Calu3 (cell line): ENCODE measurements at regions of chr4 and their contacts with region 1.

Region 1: DNA sequence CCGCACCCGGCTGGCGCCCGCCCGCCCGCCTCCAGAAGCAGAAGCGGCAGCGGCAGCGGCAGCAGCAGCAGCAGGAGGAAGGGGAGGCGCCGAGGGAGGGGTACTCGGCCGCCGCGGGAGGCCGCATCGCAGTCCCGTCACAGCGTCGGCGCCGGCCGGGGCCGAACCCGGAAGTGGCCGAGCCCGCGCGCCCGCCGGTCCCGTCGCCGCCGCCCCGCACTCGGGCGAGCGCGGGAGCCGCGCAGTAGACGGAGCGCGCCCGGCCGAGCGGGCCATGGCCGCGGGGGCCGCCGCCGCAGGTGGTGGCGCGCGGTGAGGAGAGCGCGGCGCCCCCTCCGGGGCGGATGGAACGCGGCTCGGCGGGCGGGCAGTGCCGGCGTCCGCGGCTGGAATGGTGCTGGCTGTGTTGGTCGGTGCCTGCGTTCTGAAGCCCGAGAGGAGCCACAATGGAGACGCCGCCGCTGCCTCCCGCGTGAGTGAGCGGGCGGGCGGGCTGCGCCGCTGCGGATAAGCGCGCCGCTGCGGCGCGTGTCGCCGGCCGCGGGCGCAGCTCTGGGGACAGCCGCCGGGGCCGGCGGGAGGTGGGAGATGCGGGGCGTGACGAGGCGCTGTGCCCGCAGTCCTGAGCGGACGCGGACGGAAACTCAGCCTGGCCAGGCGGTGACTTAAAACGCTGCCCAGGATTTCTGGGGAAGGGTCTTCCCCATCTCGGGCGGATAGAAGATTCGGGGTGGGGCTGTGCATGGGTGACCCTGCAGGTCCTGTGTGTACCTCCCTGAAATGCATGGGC is at the start of gene KLHL2:
- DNase-seq: peak; percentile 72
- H3K4me3 Mint-ChIP-seq: peak within 1 kb of the TSS; percentile 58
- H3K27ac Mint-ChIP-seq: peak within 1 kb of the TSS; percentile 9
- H3K4me1 Mint-ChIP-seq: peaks cover 39% of the 10 kb centered on the region
- H3K27me3 Mint-ChIP-seq: no peaks in the 10 kb centered on the region
- CTCF ChIP-seq: no peak
- total RNA-seq, gene KLHL2: 12.9 and 13.8 TPM in 2 replicates

Region 2: DNA sequence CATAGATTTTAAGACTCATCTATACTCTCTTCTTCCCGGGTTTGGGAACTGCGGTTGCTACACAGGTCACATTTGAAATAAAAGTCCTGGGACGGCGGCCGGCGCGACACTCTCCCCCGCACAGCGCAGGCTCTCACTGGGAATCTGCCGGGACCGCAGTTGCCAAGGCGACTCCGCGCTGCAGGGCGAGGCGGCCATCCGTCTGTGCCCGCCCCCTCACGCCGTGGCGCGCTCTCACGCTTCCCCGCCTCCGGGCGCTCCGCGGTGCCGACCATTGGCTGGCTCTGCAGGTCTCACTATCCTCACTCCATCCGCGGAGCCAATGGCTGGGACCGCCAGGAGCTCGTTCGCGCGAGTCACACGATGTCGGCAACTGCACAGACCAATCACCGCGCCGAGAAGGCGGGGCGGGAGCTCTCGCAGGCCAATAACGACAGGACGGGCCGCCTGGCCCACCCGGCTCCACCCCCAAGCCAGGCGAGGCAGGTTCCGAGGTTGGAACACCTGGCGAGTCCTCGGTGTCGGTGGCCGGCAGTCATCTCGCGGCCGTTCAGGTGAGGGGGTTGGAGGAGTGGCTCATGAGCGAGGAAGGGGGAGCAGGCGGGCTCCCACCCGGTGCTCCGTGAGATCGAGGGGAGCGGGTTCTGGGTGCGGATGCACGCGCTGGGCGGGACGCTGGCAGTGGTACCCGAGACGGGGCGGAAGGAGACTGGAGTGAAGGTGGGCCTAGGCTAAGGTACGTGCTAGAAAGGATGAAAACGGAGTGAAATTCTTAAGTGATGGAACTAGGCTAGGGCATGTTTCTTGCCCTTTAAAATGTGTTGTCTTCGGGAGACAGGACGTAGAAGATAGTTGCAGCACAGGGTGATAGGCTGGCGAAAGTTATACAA is 119.8 kb after region 1 on chr4 and contains the start of gene MSMO1:
- CTCF ChIA-PET with region 1: no interaction called
- intact Hi-C with region 1: loop called (anchors 5 kb)
- DNase-seq: peak; percentile 95
- H3K4me3 Mint-ChIP-seq: no peak within 1 kb of the TSS
- H3K27ac Mint-ChIP-seq: no peak within 1 kb of the TSS
- H3K4me1 Mint-ChIP-seq: peaks cover 22% of the 10 kb centered on the region
- H3K27me3 Mint-ChIP-seq: no peaks in the 10 kb centered on the region
- CTCF ChIP-seq: no peak
- total RNA-seq, gene MSMO1: 93.6 and 111 TPM in 2 replicates